CD4-positive, alpha-beta memory T cell (primary cell): ENCODE measurements at regions of chr6 and their contacts with region 1.

Region 1: GRCh38 chr6:105402939-105403935 is at the start of gene PREP:
- DNase-seq: peak; percentile 76 to 85 (median 84)
- H3K4me3 ChIP-seq: peak within 1 kb of the TSS; percentile 62 to 88
- H3K4me3 Mint-ChIP-seq: peak within 1 kb of the TSS; percentile 91 to 94 (median 94)
- H3K27ac ChIP-seq: peak within 1 kb of the TSS; percentile 47
- H3K27ac Mint-ChIP-seq: peak within 1 kb of the TSS; percentile 79 to 88 (median 85)
- H3K4me1 ChIP-seq: peaks cover 47% of the 10 kb centered on the region
- H3K4me1 Mint-ChIP-seq: peaks cover 39 to 52% (median 48%) of the 10 kb centered on the region in 4 donors
- H3K27me3 ChIP-seq: no peaks in the 10 kb centered on the region
- H3K27me3 Mint-ChIP-seq: peaks cover 1 to 7% of the 10 kb centered on the region in 2 donors
- total RNA-seq, gene PREP: 34.4 to 34.8 TPM

Region 2: DNA sequence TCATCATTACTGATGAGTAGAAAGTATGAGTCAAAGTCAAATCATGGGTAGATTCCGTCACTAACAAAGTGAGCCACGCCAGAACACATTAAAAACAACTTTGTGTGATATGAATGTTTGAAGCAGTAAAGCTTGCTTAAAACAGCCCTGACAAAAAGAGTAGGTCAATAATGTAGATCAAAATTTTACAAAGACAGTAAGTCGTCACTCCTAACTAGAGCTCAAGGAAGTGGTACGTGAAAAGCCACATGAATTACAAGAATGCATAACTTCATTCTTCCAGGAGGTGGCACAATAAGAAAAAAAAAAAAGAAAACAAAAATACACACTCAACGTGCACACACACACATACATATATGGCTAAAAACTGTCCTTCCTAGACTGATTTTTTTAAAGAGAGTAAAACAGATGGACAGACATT is 613.5 kb before region 1 on chr6:
- CTCF ChIA-PET with region 1: no interaction called
- POLR2A ChIA-PET with region 1: no interaction called
- intact Hi-C with region 1: loop called (anchors 5 kb)
- DNase-seq: peak; percentile 45 to 72 (median 48)
- H3K4me3 ChIP-seq: no peak overlapping the region
- H3K4me3 Mint-ChIP-seq: peak overlapping the region in 7 of 8 donors; percentile 28 to 75 (median 58)
- H3K27ac ChIP-seq: no peak overlapping the region
- H3K27ac Mint-ChIP-seq: peak overlapping the region in 6 of 7 donors; percentile 1 to 89 (median 66)
- H3K4me1 ChIP-seq: peaks cover 25% of the 10 kb centered on the region
- H3K4me1 Mint-ChIP-seq: peaks cover 15 to 23% (median 20%) of the 10 kb centered on the region in 4 donors
- H3K27me3 ChIP-seq: no peaks in the 10 kb centered on the region
- H3K27me3 Mint-ChIP-seq: no peaks in the 10 kb centered on the region

Region 3: DNA sequence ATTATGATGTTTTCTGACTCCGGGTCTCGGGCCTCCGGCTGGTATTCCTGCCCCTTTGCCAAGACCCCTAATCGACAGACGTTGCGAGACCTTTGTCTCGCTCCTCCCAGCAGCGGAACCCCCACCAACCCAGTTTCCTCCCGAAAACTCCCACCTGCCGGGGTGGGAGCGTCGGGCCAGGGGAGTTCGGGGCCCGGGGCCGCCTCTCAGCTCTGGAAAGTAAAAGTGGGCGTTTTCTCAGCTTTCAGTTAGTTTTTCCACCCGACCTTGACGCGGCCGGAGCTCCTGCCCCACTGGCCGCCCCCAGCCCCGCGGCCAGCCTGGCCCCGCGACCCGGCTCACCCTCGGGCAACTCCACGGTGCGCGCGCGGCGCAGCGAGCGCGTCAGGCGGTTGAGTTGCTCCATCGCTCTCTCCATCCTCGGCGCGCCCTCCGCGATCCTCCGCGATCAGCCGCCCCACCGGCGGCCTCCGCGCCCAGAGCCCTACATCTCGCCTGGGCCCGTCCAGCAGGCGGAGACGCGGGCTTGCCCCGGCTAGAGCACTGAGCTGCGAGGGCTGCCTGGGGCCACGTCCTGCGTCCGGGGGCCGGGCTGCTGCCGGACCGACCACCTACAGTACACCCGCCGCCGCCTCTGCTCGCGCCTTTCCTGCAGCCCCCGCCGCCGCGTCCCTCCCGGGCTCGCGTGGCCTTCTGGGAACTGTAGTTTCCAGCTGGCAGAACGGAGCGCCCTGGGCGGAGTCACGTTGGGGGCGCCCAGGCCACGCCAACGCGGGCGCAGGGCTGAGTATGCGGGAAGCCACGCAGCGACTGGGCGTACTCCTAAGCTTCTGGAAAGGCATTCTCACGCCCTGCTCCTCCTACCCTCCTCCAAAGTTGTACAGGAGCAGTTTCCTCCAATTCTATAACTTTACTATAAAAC is 543.8 kb before region 1 on chr6 and contains the start of gene HACE1:
- CTCF ChIA-PET with region 1: no interaction called
- POLR2A ChIA-PET with region 1: no interaction called
- intact Hi-C with region 1: loop called (anchors 1 kb)
- DNase-seq: peak; percentile 86 to 90 (median 89)
- H3K4me3 ChIP-seq: peak within 1 kb of the TSS; percentile 48 to 94
- H3K4me3 Mint-ChIP-seq: peak within 1 kb of the TSS; percentile 90 to 95 (median 92)
- H3K27ac ChIP-seq: peak within 1 kb of the TSS; percentile 38
- H3K27ac Mint-ChIP-seq: peak within 1 kb of the TSS; percentile 66 to 89 (median 83)
- H3K4me1 ChIP-seq: peaks cover 14% of the 10 kb centered on the region
- H3K4me1 Mint-ChIP-seq: peaks cover 8 to 22% (median 16%) of the 10 kb centered on the region in 4 donors
- H3K27me3 ChIP-seq: no peaks in the 10 kb centered on the region
- H3K27me3 Mint-ChIP-seq: peaks cover 3 to 5% of the 10 kb centered on the region in 2 donors
- total RNA-seq, gene HACE1: 14.4 to 16.0 TPM

Region 4: GRCh38 chr6:105087571-105088211 is 315.5 kb before region 1 on chr6:
- CTCF ChIA-PET with region 1: interaction called, 7 read pairs
- POLR2A ChIA-PET with region 1: no interaction called
- intact Hi-C with region 1: loop called (anchors 1 kb)
- DNase-seq: peak in 4 of 5 donors; percentile 18 to 35 (median 25)
- H3K4me3 ChIP-seq: no peak overlapping the region
- H3K4me3 Mint-ChIP-seq: no peak overlapping the region
- H3K27ac ChIP-seq: no peak overlapping the region
- H3K27ac Mint-ChIP-seq: no peak overlapping the region
- H3K4me1 ChIP-seq: no peaks in the 10 kb centered on the region
- H3K4me1 Mint-ChIP-seq: no peaks in the 10 kb centered on the region
- H3K27me3 ChIP-seq: no peaks in the 10 kb centered on the region
- H3K27me3 Mint-ChIP-seq: peaks cover 1 to 2% of the 10 kb centered on the region in 2 donors

Region 5: GRCh38 chr6:105317607-105318533 is 85.4 kb before region 1 on chr6:
- CTCF ChIA-PET with region 1: interaction called, 4 read pairs
- POLR2A ChIA-PET with region 1: no interaction called
- intact Hi-C with region 1: loop called (anchors 5 kb)
- DNase-seq: no peak
- H3K4me3 ChIP-seq: no peak overlapping the region
- H3K4me3 Mint-ChIP-seq: no peak overlapping the region
- H3K27ac ChIP-seq: no peak overlapping the region
- H3K27ac Mint-ChIP-seq: peak overlapping the region in 1 of 7 donors; percentile 10
- H3K4me1 ChIP-seq: no peaks in the 10 kb centered on the region
- H3K4me1 Mint-ChIP-seq: peaks cover 0 to 4% (median 1%) of the 10 kb centered on the region in 4 donors
- H3K27me3 ChIP-seq: no peaks in the 10 kb centered on the region
- H3K27me3 Mint-ChIP-seq: no peaks in the 10 kb centered on the region

Region 6: DNA sequence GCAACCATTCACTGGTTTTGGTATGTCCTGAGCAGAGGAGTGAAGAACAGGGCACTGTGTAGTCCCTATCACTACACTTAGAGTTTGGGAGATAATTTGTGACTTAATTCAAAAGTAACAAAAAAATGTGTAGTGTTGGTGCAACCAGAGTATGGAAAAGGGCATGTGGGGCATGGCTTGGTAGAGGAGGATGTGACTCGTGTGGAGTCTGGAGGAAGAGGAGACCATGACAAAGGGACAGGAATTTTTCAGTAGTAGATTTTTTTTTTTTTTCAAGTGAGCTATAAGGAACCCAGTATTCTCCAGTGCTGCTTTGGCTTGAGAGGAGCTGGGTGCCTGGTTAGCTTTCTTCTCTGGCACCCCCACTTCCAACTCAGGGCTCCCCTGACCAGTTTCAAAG is 1629.9 kb after region 1 on chr6:
- CTCF ChIA-PET with region 1: no interaction called
- POLR2A ChIA-PET with region 1: no interaction called
- intact Hi-C with region 1: loop called (anchors 1 kb)
- DNase-seq: no peak
- H3K4me3 ChIP-seq: no peak overlapping the region
- H3K4me3 Mint-ChIP-seq: no peak overlapping the region
- H3K27ac ChIP-seq: no peak overlapping the region
- H3K27ac Mint-ChIP-seq: peak overlapping the region in 1 of 7 donors; percentile 19
- H3K4me1 ChIP-seq: peaks cover 15% of the 10 kb centered on the region
- H3K4me1 Mint-ChIP-seq: peaks cover 25 to 52% (median 32%) of the 10 kb centered on the region in 4 donors
- H3K27me3 ChIP-seq: no peaks in the 10 kb centered on the region
- H3K27me3 Mint-ChIP-seq: no peaks in the 10 kb centered on the region